ENCODE measurements at regions of chr17 and their contacts with region 1.

Region 1: GRCh38 chr17:43018008-43018853 is 4.0 kb downstream of the VAT1 start:
- DNase-seq: no peak
- H3K4me3 ChIP-seq: no peak overlapping the region
- H3K27ac ChIP-seq: peak overlapping the region in 2 of 4 donors; percentile 24 to 91
- H3K4me1 ChIP-seq: peaks cover 6 to 43% (median 24%) of the 10 kb centered on the region in 4 donors
- H3K27me3 ChIP-seq: peaks cover 3% of the 10 kb centered on the region
- CTCF ChIP-seq: no peak
- EP300 ChIP-seq: no peak
- POLR2A ChIP-seq: no peak

Region 2: GRCh38 chr17:42744806-42745617 is 273.2 kb before region 1 on chr17 and contains the start of gene EZH1:
- in situ Hi-C with region 1: no loop called
- intact Hi-C with region 1: no loop called
- DNase-seq: peak; percentile 93
- H3K4me3 ChIP-seq: peak within 1 kb of the TSS; percentile 49 to 88 (median 60)
- H3K27ac ChIP-seq: peak within 1 kb of the TSS; percentile 85 to 93 (median 90)
- H3K4me1 ChIP-seq: peaks cover 12 to 19% (median 14%) of the 10 kb centered on the region in 4 donors
- H3K27me3 ChIP-seq: no peaks in the 10 kb centered on the region
- CTCF ChIP-seq: peak in 2 of 5 experiments; percentile 45 to 53
- EP300 ChIP-seq: no peak
- POLR2A ChIP-seq: peak; percentile 85
- total RNA-seq, gene EZH1: 30.4 to 159 (median 43.4) TPM

Region 3: DNA sequence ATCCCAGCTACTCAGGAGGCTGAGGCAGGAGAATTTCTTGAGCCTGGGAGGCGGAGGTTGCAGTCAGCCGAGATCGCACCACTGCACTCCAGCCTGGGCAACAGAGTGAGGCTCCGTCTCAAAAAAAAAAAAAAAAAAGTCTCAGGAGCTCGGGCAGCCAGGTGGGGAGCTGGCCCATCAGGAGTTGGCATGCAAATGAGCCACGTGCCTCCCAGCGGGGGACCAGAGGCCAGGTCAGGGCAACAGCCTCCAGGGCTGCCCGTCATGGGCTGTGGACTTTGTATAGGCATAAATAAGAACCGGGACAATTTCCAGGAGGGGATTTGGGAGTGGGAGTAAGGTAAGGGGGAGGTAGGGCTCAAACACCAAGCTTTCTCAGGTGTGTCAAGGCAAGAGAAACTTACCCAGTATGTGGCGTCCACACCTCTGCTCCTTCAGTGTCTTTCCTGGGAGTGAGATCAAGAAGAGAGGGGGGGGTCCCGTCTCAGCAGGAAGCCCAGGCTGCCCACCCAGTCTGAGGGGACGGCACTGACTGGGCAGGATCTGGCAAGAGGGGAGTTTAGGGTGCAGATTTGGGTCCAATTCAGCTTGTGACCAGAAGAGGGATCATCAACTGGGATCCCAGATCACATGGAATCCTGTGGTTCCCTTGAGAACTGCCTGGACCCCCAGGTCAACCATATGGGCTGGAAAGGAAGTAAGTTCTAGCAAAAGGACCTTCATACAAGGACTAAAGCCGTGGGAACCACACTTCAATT is 139.9 kb before region 1 on chr17:
- in situ Hi-C with region 1: no loop called
- intact Hi-C with region 1: no loop called
- DNase-seq: peak; percentile 60
- H3K4me3 ChIP-seq: no peak overlapping the region
- H3K27ac ChIP-seq: no peak overlapping the region
- H3K4me1 ChIP-seq: no peaks in the 10 kb centered on the region
- H3K27me3 ChIP-seq: peaks cover 38% of the 10 kb centered on the region
- CTCF ChIP-seq: no peak
- EP300 ChIP-seq: no peak
- POLR2A ChIP-seq: no peak

Region 4: GRCh38 chr17:42969001-42969581 is 49.1 kb before region 1 on chr17:
- in situ Hi-C with region 1: no loop called
- intact Hi-C with region 1: no loop called
- DNase-seq: no peak
- H3K4me3 ChIP-seq: no peak overlapping the region
- H3K27ac ChIP-seq: no peak overlapping the region
- H3K4me1 ChIP-seq: peaks cover 0 to 4% (median 0%) of the 10 kb centered on the region in 4 donors
- H3K27me3 ChIP-seq: no peaks in the 10 kb centered on the region
- CTCF ChIP-seq: no peak
- EP300 ChIP-seq: no peak
- POLR2A ChIP-seq: no peak

Region 5: GRCh38 chr17:43316522-43317142 is 298.4 kb after region 1 on chr17:
- in situ Hi-C with region 1: no loop called
- intact Hi-C with region 1: loop called (anchors 10 kb)
- DNase-seq: no peak
- H3K4me3 ChIP-seq: no peak overlapping the region
- H3K27ac ChIP-seq: no peak overlapping the region
- H3K4me1 ChIP-seq: no peaks in the 10 kb centered on the region
- H3K27me3 ChIP-seq: no peaks in the 10 kb centered on the region
- CTCF ChIP-seq: no peak
- EP300 ChIP-seq: no peak
- POLR2A ChIP-seq: no peak

Region 6: GRCh38 chr17:44581868-44582267 is 1563.6 kb after region 1 on chr17:
- in situ Hi-C with region 1: no loop called
- intact Hi-C with region 1: no loop called
- DNase-seq: no peak
- H3K4me3 ChIP-seq: no peak overlapping the region
- H3K27ac ChIP-seq: no peak overlapping the region
- H3K4me1 ChIP-seq: no peaks in the 10 kb centered on the region
- H3K27me3 ChIP-seq: peaks cover 17% of the 10 kb centered on the region
- CTCF ChIP-seq: no peak
- EP300 ChIP-seq: no peak
- POLR2A ChIP-seq: no peak

Measured in transverse colon (tissue), 4 donors.